A549 (cell line): ENCODE measurements at regions of chr17 and their contacts with region 1.

Region 1: GRCh38 chr17:35088881-35089585 is 25.5 kb upstream of the RFFL start:
- DNase-seq: peak in 1 of 2 experiments; percentile 86
- ATAC-seq: peak; percentile 70 to 87
- H3K4me3 ChIP-seq: peak overlapping the region; percentile 90
- H3K27ac ChIP-seq: peak overlapping the region; percentile 96
- H3K4me1 ChIP-seq: peaks cover 42% of the 10 kb centered on the region
- CTCF ChIP-seq: peak; percentile 98
- EP300 ChIP-seq: no peak
- POLR2A ChIP-seq: no peak
- RAD21 ChIP-seq: peak; percentile 59 to 82

Region 2: DNA sequence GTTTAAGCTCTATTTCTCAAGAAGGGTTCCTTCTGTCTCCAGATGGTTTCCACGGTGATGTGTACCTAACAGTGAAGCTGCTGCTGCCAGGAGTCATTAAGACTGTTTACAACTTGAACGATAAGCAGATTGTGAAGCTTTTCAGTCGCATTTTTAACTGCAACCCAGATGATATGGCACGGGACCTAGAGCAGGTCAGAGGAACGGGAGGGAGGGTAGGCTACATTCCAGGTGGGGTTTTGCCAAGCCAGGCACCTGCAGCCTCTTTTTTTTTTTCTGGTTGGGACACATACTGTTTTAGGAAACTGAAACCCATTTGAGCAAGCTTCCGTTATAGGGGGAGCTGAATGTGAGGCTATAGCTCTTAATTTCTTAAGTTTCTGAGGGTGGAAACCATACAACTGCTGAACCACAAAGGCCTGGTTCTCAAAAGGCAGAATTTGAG is 98.1 kb before region 1 on chr17:
- CTCF ChIA-PET with region 1: interaction called, 34 read pairs
- POLR2A ChIA-PET with region 1: no interaction called
- DNase-seq: no peak
- ATAC-seq: no peak
- H3K4me3 ChIP-seq: no peak overlapping the region
- H3K27ac ChIP-seq: no peak overlapping the region
- H3K4me1 ChIP-seq: no peaks in the 10 kb centered on the region
- CTCF ChIP-seq: no peak
- EP300 ChIP-seq: no peak
- POLR2A ChIP-seq: no peak
- RAD21 ChIP-seq: no peak

Region 3: GRCh38 chr17:35022536-35023063 is 66.4 kb before region 1 on chr17:
- CTCF ChIA-PET with region 1: interaction called, 19 read pairs
- POLR2A ChIA-PET with region 1: no interaction called
- DNase-seq: peak; percentile 74 to 82
- ATAC-seq: peak; percentile 92 to 94
- H3K4me3 ChIP-seq: no peak overlapping the region
- H3K27ac ChIP-seq: peak overlapping the region; percentile 77 to 80; a peak in 5 of 6 replicates
- H3K4me1 ChIP-seq: peaks cover 31% of the 10 kb centered on the region
- CTCF ChIP-seq: no peak
- EP300 ChIP-seq: no peak
- POLR2A ChIP-seq: no peak
- RAD21 ChIP-seq: no peak

Region 4: DNA sequence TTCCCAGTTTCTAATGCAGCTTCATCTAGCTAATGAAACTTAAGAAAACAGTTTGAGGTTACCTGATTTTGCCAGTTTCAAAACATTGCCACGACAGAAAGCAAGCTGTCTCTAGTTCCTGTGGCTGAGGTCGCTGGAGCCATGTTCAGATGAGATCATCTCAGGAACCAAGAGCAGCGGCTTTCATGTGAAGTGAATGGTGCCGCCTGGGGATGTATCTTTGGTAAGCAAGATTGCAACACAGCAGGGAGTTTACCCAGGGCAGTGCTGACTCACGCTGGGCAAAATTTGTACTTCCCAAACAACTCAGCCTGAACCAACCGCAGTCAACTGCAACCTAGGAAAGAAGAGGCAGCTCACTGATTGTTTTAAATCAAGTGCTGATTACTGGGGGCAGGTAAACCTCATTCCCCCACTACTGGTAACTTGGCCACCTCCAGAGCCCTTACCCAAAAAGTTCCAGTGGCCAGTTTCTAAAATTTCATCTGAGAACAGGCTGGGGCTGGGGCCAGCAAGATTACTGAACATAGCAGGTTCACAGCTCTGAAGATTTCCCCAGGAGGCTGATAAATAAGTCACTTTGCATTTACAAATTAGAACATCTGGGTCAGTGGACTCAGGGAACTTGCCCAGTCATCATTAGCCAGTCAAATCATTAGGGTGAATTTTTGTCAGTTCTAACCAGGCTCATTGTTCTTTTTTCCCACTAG is 25.4 kb before region 1 on chr17 and contains the start of gene RFFL:
- CTCF ChIA-PET with region 1: interaction called, 38 read pairs
- POLR2A ChIA-PET with region 1: interaction called, 21 read pairs
- DNase-seq: peak; percentile 99
- ATAC-seq: peak; percentile 97 to 100
- H3K4me3 ChIP-seq: peak within 1 kb of the TSS; percentile 38
- H3K27ac ChIP-seq: peak within 1 kb of the TSS; percentile 92 to 93
- H3K4me1 ChIP-seq: peaks cover 59% of the 10 kb centered on the region
- CTCF ChIP-seq: no peak
- EP300 ChIP-seq: peak; percentile 61 to 86; a peak in 3 of 5 replicates
- POLR2A ChIP-seq: peak; percentile 31
- RAD21 ChIP-seq: peak; percentile 56 to 67
- polyA plus RNA-seq, gene RFFL: 35.5 and 49.4 TPM in 2 replicates

Region 5: GRCh38 chr17:35076874-35077273 is 12.2 kb before region 1 on chr17:
- CTCF ChIA-PET with region 1: interaction called, 21 read pairs
- POLR2A ChIA-PET with region 1: interaction called, 4 read pairs
- DNase-seq: no peak
- ATAC-seq: no peak
- H3K4me3 ChIP-seq: no peak overlapping the region
- H3K27ac ChIP-seq: peak overlapping the region; percentile 9 to 52; a peak in 2 of 6 replicates
- H3K4me1 ChIP-seq: peaks cover 83% of the 10 kb centered on the region
- CTCF ChIP-seq: no peak
- EP300 ChIP-seq: no peak
- POLR2A ChIP-seq: no peak
- RAD21 ChIP-seq: no peak